Panc1 (cell line): ENCODE measurements at regions of chr3 and their contacts with region 1.

Region 1: GRCh38 chr3:9653565-9654248 is 4.4 kb downstream of the MTMR14 start:
- DNase-seq: no peak
- ATAC-seq: no peak
- H3K4me3 ChIP-seq: no peak overlapping the region
- H3K27ac ChIP-seq: no peak overlapping the region
- H3K4me1 ChIP-seq: peaks cover 4% of the 10 kb centered on the region; the same call in 1 of the 2 replicates
- H3K27me3 ChIP-seq: no peaks in the 10 kb centered on the region
- CTCF ChIP-seq: no peak

Region 2: GRCh38 chr3:9422712-9423424 is 230.8 kb before region 1 on chr3:
- CTCF ChIA-PET with region 1: no interaction called
- POLR2A ChIA-PET with region 1: interaction called, 13 read pairs
- in situ Hi-C with region 1: no loop called
- intact Hi-C with region 1: no loop called
- DNase-seq: peak; percentile 85
- ATAC-seq: peak; percentile 96
- H3K4me3 ChIP-seq: peak overlapping the region; percentile 13 to 37
- H3K27ac ChIP-seq: peak overlapping the region; percentile 96
- H3K4me1 ChIP-seq: peaks cover 52% of the 10 kb centered on the region
- H3K27me3 ChIP-seq: no peaks in the 10 kb centered on the region
- CTCF ChIP-seq: peak; percentile 58; the same call in 1 of the 2 replicates

Region 3: GRCh38 chr3:9491506-9491905 is 162.2 kb before region 1 on chr3:
- CTCF ChIA-PET with region 1: no interaction called
- POLR2A ChIA-PET with region 1: no interaction called
- in situ Hi-C with region 1: no loop called
- intact Hi-C with region 1: no loop called
- DNase-seq: no peak
- ATAC-seq: no peak
- H3K4me3 ChIP-seq: no peak overlapping the region
- H3K27ac ChIP-seq: no peak overlapping the region
- H3K4me1 ChIP-seq: no peaks in the 10 kb centered on the region
- H3K27me3 ChIP-seq: no peaks in the 10 kb centered on the region
- CTCF ChIP-seq: no peak

Region 4: GRCh38 chr3:9830311-9830710 is 176.6 kb after region 1 on chr3:
- CTCF ChIA-PET with region 1: no interaction called
- POLR2A ChIA-PET with region 1: interaction called, 14 read pairs
- in situ Hi-C with region 1: no loop called
- intact Hi-C with region 1: no loop called
- DNase-seq: no peak
- ATAC-seq: no peak
- H3K4me3 ChIP-seq: no peak overlapping the region
- H3K27ac ChIP-seq: no peak overlapping the region
- H3K4me1 ChIP-seq: no peaks in the 10 kb centered on the region
- H3K27me3 ChIP-seq: no peaks in the 10 kb centered on the region
- CTCF ChIP-seq: no peak

Region 5: DNA sequence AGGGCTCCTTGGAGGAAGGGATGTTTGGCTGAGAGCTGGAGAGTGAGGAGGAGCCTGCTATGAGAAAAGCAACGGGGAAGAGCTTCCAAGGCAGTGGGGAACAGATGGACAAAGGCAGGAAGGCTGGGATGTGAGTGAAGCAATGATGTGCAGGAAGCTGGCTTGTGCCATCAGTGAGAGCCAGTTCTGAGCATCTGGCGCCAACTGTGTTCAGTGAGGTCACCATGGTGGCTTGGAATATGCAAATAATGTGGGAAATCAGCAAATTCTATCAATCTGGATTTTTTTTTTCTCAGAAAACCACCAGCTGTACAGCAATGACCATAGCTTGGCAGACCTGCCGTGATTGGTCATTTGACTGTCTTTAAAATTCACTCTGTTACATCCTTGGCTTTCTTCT is 1137.9 kb after region 1 on chr3:
- CTCF ChIA-PET with region 1: no interaction called
- POLR2A ChIA-PET with region 1: no interaction called
- in situ Hi-C with region 1: no loop called
- intact Hi-C with region 1: no loop called
- DNase-seq: no peak
- ATAC-seq: no peak
- H3K4me3 ChIP-seq: no peak overlapping the region
- H3K27ac ChIP-seq: no peak overlapping the region
- H3K4me1 ChIP-seq: no peaks in the 10 kb centered on the region
- H3K27me3 ChIP-seq: peaks cover 11% of the 10 kb centered on the region
- CTCF ChIP-seq: no peak